HCT116 (cell line): ENCODE measurements at regions of chr1 and their contacts with region 1.

Region 1: DNA sequence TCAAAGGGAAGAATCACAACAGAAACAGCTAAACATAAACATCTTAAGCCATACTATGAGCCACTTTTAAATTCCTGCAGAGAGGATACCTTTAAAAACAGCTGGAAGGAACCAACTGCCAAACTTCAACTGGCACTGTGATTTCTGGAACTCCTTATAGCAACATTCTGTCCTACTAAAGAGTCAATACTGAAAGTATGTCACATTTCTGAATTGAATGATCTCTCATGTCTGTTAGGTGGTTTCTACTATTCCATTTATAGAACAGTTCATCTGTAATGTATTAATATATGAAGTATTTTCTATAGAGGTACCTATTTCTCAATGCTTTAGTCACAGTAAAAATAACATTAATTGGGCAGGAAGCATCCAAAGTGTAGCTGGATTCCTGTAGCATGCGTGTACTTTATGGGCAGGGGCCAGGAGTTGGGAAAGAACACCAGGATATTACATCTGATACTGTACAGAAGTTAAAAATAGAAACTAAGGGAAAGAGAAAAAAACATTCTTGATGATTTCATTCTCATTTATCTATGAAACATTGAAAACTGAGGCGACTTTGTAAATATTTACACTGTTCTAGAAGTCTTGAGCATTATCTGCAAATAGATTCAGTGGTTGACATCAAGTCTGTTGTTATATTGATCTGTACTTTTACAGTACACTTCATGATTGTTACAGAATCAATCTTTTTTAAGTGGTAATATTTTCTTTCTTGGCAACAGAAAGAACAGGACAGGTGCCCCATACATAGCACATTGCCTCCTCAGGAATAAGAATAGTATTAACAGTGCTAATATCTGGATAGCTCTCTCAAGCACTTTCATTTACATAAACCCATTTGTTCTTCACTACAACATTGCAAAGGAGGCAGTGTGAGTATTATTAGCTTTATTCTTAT is 6.1 kb upstream of the ZNF281 start:
- DNase-seq: peak; percentile 82
- ATAC-seq: peak; percentile 71
- H3K4me3 ChIP-seq: peak overlapping the region; percentile 3 to 40
- H3K27ac ChIP-seq: peak overlapping the region; percentile 69
- H3K4me1 ChIP-seq: peaks cover 35 to 66% of the 10 kb centered on the region in 2 experiments
- H3K27me3 ChIP-seq: no peaks in the 10 kb centered on the region
- CTCF ChIP-seq: no peak
- POLR2A ChIP-seq: no peak
- RAD21 ChIP-seq: no peak

Region 2: GRCh38 chr1:200180821-200181220 is 235.1 kb before region 1 on chr1:
- CTCF ChIA-PET with region 1: no interaction called
- POLR2A ChIA-PET with region 1: no interaction called
- RAD21 ChIA-PET with region 1: no interaction called
- intact Hi-C with region 1: no loop called
- DNase-seq: peak; percentile 47
- ATAC-seq: peak; percentile 80
- H3K4me3 ChIP-seq: no peak overlapping the region
- H3K27ac ChIP-seq: no peak overlapping the region
- H3K4me1 ChIP-seq: peaks cover 22 to 51% of the 10 kb centered on the region in 2 experiments
- H3K27me3 ChIP-seq: no peaks in the 10 kb centered on the region
- CTCF ChIP-seq: peak; percentile 30 to 40 (median 40); a peak in 4 of 6 replicates
- POLR2A ChIP-seq: no peak
- RAD21 ChIP-seq: peak; percentile 81

Region 3: GRCh38 chr1:200428482-200429205 is 12.7 kb after region 1 on chr1:
- CTCF ChIA-PET with region 1: no interaction called
- POLR2A ChIA-PET with region 1: interaction called, 10 read pairs
- RAD21 ChIA-PET with region 1: no interaction called
- intact Hi-C with region 1: no loop called
- DNase-seq: no peak
- ATAC-seq: no peak
- H3K4me3 ChIP-seq: no peak overlapping the region
- H3K27ac ChIP-seq: no peak overlapping the region
- H3K4me1 ChIP-seq: 0 out of 4 replicates have a peak, but pooled peaks cover 0 to 7% of the 10 kb centered on the region in 2 experiments
- H3K27me3 ChIP-seq: no peaks in the 10 kb centered on the region
- CTCF ChIP-seq: no peak
- POLR2A ChIP-seq: no peak
- RAD21 ChIP-seq: no peak

Region 4: GRCh38 chr1:200642481-200642880 is 226.5 kb after region 1 on chr1:
- CTCF ChIA-PET with region 1: no interaction called
- POLR2A ChIA-PET with region 1: no interaction called
- RAD21 ChIA-PET with region 1: no interaction called
- intact Hi-C with region 1: no loop called
- DNase-seq: no peak
- ATAC-seq: no peak
- H3K4me3 ChIP-seq: no peak overlapping the region
- H3K27ac ChIP-seq: no peak overlapping the region; the same call in 1 of the 2 replicates
- H3K4me1 ChIP-seq: peaks cover 33 to 61% of the 10 kb centered on the region in 2 experiments
- H3K27me3 ChIP-seq: no peaks in the 10 kb centered on the region
- CTCF ChIP-seq: no peak
- POLR2A ChIP-seq: no peak
- RAD21 ChIP-seq: no peak